ENCODE measurements at regions of chr12 and their contacts with region 1.

Region 1: GRCh38 chr12:120737557-120738251 is 12.1 kb downstream of the ACADS start:
- DNase-seq: peak in 1 of 2 experiments; percentile 68
- H3K4me3 ChIP-seq: no peak overlapping the region
- H3K27ac ChIP-seq: no peak overlapping the region
- H3K4me1 ChIP-seq: no peaks in the 10 kb centered on the region
- H3K27me3 ChIP-seq: no peaks in the 10 kb centered on the region
- CTCF ChIP-seq: peak; percentile 53 to 70 (median 61)
- EP300 ChIP-seq: no peak
- POLR2A ChIP-seq: no peak
- RAD21 ChIP-seq: peak; percentile 74 to 82

Region 2: DNA sequence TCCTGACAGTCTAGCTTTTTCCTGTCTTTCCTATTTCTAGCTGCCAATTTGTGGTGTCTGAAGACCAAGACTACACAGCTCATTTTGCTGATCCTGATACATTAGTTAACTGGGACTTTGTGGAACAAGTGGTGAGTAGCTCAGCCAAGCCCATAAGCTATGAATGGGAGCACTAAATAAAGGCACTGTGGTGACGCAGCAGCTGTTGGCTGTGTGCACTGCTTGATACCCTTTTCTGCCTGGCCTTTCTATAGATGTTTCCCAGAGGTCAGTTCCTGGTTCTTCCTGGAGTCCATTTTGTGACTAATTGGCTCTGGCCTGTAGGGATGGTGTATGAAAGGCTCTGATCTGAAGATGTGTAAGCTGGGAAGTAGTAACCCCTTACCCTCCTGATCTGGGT is 183.0 kb before region 1 on chr12:
- CTCF ChIA-PET with region 1: no interaction called
- POLR2A ChIA-PET with region 1: no interaction called
- DNase-seq: no peak
- H3K4me3 ChIP-seq: no peak overlapping the region
- H3K27ac ChIP-seq: no peak overlapping the region
- H3K4me1 ChIP-seq: no peaks in the 10 kb centered on the region
- H3K27me3 ChIP-seq: no peaks in the 10 kb centered on the region
- CTCF ChIP-seq: no peak
- EP300 ChIP-seq: no peak
- POLR2A ChIP-seq: no peak
- RAD21 ChIP-seq: no peak

Region 3: DNA sequence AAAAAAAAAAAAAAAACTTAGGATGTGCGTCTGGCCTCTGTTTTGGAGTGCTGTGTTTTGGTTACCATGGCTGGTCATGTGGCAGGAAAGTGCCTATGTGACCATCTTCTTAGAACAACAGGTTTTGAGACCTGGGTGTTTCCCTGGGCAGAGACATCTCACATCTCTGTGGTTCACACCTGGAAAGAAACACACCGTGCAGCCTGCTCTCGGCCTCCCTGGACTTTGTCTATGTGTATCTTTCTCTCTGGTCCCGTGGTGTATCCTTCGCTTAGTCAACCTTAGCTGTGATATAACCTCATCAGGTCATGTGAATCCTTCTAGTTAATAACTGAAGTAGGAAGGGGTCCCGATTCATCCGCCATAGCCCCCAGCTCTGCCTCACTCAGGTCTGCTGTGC is 10.5 kb after region 1 on chr12:
- CTCF ChIA-PET with region 1: interaction called, 10 read pairs
- POLR2A ChIA-PET with region 1: interaction called, 4 read pairs
- DNase-seq: no peak
- H3K4me3 ChIP-seq: no peak overlapping the region
- H3K27ac ChIP-seq: no peak overlapping the region
- H3K4me1 ChIP-seq: no peaks in the 10 kb centered on the region
- H3K27me3 ChIP-seq: no peaks in the 10 kb centered on the region
- CTCF ChIP-seq: no peak
- EP300 ChIP-seq: no peak
- POLR2A ChIP-seq: no peak
- RAD21 ChIP-seq: no peak

Region 4: DNA sequence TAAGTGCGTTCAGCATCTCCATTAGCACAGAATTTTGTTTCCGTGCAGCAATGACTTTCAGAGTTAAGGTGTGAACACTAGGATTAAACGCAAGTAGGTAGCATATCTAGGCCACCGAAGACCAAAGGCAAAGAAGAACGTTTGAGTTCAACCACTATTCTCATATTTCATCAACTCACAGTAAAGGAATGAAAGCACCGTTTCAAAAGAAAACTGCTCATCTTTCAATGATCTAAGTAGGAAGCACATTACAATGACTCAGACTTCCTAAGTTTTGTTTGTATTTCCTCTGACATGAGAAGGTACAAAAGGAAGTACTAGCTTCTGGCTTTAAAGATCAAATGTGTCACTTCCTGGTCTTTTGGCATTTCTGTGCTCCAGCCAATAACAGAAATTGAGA is 45.5 kb after region 1 on chr12:
- CTCF ChIA-PET with region 1: interaction called, 10 read pairs
- POLR2A ChIA-PET with region 1: no interaction called
- DNase-seq: no peak
- H3K4me3 ChIP-seq: no peak overlapping the region
- H3K27ac ChIP-seq: no peak overlapping the region
- H3K4me1 ChIP-seq: no peaks in the 10 kb centered on the region
- H3K27me3 ChIP-seq: no peaks in the 10 kb centered on the region
- CTCF ChIP-seq: no peak
- EP300 ChIP-seq: no peak
- POLR2A ChIP-seq: no peak
- RAD21 ChIP-seq: no peak

Region 5: DNA sequence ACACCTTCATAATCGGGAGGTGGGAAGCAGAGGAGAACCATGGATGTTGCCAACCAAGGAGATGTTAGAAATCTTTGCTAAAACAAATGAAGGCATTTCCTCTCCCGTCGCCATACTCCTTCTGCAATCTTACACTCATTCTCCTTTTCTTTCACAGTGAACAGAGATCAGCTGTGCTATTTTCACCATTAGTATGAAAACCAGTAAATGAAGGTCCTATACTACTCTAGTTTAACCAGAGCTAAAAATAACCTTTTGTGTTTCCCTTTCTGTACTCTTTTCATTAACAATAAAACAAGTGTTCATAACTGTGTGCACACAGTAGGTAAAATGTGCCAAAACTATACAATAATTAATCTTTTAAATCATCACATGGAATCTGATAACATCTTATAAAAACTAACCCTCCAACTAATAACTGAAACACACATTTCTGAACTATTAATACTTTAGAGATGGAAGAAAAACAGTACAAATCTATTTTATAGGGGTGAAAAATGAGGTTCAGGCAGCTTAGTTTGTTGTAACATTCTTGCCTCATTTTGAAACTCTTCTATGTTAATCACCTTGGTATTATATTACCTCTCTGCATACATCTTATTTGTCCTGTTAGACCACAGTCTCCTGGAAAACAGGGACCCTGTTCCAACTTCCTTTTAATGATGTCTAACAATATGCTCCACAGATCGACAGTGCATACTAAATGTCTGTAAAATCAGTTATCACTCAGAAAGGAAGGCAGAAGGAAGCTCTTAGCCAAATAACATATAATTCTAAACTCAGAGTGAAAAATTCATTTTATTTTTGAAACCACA is 97.0 kb after region 1 on chr12:
- CTCF ChIA-PET with region 1: no interaction called
- POLR2A ChIA-PET with region 1: no interaction called
- DNase-seq: no peak
- H3K4me3 ChIP-seq: no peak overlapping the region
- H3K27ac ChIP-seq: no peak overlapping the region
- H3K4me1 ChIP-seq: peaks cover 0 to 7% (median 4%) of the 10 kb centered on the region in 4 experiments; a peak in 1 of 7 replicates
- H3K27me3 ChIP-seq: no peaks in the 10 kb centered on the region
- CTCF ChIP-seq: no peak
- EP300 ChIP-seq: no peak
- POLR2A ChIP-seq: no peak
- RAD21 ChIP-seq: no peak